AG04450 (cell line): ENCODE measurements at regions of chr10 and their contacts with region 1.

Region 1: DNA sequence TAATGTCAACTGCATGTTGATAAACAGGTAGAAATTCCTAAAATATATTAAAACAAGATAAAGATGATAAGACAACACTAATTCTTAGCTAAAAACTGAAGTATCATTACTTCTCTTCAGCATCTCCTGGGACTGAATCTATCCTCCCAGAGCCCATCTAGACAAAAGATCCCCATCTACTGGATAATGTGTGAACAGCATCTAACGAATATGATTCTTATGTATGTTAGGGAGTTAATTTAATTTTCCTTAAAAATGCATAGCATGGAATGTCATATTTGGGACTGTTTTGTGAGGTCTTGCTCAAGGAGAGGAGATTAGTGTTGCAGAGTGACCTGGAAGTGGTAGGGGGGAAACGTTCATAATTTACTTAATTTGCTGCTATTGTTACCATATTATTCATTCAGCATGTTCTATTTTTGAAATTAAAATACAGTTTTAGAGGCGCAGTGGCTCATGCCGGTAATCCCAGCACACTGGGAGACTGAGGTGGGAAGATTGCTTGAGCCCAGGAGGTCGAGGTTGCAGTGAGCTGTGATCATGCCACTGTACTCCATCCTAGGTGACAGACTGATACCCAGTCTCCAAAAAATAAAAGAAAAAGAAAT is 305.1 kb upstream of the CSTF2T start:
- DNase-seq: peak; percentile 27
- H3K4me3 ChIP-seq: no peak overlapping the region
- H3K27ac ChIP-seq: no peak overlapping the region
- H3K27me3 ChIP-seq: no peaks in the 10 kb centered on the region
- CTCF ChIP-seq: peak; percentile 78

Region 2: GRCh38 chr10:51852297-51852696 is 152.1 kb before region 1 on chr10:
- CTCF ChIA-PET with region 1: no interaction called
- POLR2A ChIA-PET with region 1: no interaction called
- DNase-seq: no peak
- H3K4me3 ChIP-seq: no peak overlapping the region
- H3K27ac ChIP-seq: no peak overlapping the region
- H3K27me3 ChIP-seq: no peaks in the 10 kb centered on the region
- CTCF ChIP-seq: no peak

Region 3: DNA sequence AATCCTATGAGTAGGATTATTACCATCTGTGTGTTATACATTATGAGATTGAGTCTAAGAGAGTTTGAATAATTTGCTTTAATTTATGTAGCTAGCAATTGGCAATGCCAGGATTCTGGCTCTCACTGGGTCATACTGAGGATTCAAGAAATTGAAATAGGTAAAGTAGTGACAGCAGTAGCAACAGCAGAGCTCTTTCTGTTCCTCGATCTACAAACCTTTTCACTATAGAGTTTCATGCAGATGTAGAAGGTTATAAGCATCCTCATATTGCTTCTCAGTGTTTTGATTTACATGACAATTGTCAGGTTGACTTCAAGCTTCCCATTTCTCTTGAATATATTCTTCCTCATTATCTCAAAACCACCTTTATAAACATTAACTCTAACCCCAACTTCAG is 11.0 kb before region 1 on chr10:
- CTCF ChIA-PET with region 1: interaction called, 12 read pairs
- POLR2A ChIA-PET with region 1: no interaction called
- DNase-seq: no peak
- H3K4me3 ChIP-seq: no peak overlapping the region
- H3K27ac ChIP-seq: no peak overlapping the region
- H3K27me3 ChIP-seq: no peaks in the 10 kb centered on the region
- CTCF ChIP-seq: no peak

Region 4: GRCh38 chr10:52129410-52130178 is 125.1 kb after region 1 on chr10:
- CTCF ChIA-PET with region 1: interaction called, 4 read pairs
- POLR2A ChIA-PET with region 1: interaction called, 10 read pairs
- DNase-seq: no peak
- H3K4me3 ChIP-seq: no peak overlapping the region
- H3K27ac ChIP-seq: no peak overlapping the region
- H3K27me3 ChIP-seq: no peaks in the 10 kb centered on the region
- CTCF ChIP-seq: no peak